GM10248 (cell line): ENCODE measurements at regions of chr10 and their contacts with region 1.

Region 1: GRCh38 chr10:97196223-97197029 is 10.7 kb upstream of the SLIT1 start:
- DNase-seq: peak; percentile 79
- CTCF ChIP-seq: peak; percentile 79

Region 2: DNA sequence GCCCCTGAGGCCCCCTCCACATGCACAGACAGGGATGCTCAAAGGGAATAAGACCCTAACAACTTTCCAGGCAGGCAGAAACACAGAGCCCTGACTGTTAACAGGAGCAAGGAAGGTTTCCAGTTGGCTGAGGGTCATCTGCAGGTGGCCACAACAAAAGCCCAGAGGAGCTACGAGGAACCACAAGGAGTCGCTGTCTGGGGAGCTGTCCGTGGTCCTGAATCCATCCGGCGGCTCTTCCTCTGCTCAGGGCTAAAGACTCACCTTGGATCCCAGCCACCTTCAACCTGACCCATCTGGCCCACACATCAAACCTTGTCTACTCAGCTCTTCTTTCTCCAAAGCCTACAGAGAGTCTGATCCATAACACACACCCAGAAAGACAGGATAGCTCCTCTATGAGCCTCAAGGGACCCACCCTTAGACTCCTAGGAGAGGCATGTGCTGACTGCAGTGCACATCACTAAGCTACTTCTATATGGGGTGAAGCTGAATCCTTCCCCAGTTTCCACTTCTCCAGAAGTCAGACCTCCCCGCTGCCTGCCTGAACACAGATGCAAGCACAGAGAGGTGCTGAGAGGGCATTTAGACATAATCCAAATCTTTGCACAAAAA is 114.7 kb before region 1 on chr10:
- CTCF ChIA-PET with region 1: interaction called, 484 read pairs
- POLR2A ChIA-PET with region 1: no interaction called
- DNase-seq: peak; percentile 83
- CTCF ChIP-seq: peak; percentile 73

Region 3: GRCh38 chr10:97138174-97138573 is 58.3 kb before region 1 on chr10:
- CTCF ChIA-PET with region 1: interaction called, 12 read pairs
- POLR2A ChIA-PET with region 1: no interaction called
- DNase-seq: no peak
- CTCF ChIP-seq: no peak

Region 4: GRCh38 chr10:97179731-97180362 is 16.6 kb before region 1 on chr10:
- CTCF ChIA-PET with region 1: interaction called, 41 read pairs
- POLR2A ChIA-PET with region 1: no interaction called
- DNase-seq: no peak
- CTCF ChIP-seq: no peak

Region 5: GRCh38 chr10:97185326-97186058 is 10.9 kb before region 1 on chr10 and contains the start of gene SLIT1:
- CTCF ChIA-PET with region 1: interaction called, 41 read pairs
- POLR2A ChIA-PET with region 1: no interaction called
- DNase-seq: no peak
- CTCF ChIP-seq: no peak

Region 6: GRCh38 chr10:97234400-97234799 is 38.0 kb after region 1 on chr10:
- CTCF ChIA-PET with region 1: interaction called, 10 read pairs
- POLR2A ChIA-PET with region 1: no interaction called
- DNase-seq: no peak
- CTCF ChIP-seq: peak; percentile 11

Region 7: DNA sequence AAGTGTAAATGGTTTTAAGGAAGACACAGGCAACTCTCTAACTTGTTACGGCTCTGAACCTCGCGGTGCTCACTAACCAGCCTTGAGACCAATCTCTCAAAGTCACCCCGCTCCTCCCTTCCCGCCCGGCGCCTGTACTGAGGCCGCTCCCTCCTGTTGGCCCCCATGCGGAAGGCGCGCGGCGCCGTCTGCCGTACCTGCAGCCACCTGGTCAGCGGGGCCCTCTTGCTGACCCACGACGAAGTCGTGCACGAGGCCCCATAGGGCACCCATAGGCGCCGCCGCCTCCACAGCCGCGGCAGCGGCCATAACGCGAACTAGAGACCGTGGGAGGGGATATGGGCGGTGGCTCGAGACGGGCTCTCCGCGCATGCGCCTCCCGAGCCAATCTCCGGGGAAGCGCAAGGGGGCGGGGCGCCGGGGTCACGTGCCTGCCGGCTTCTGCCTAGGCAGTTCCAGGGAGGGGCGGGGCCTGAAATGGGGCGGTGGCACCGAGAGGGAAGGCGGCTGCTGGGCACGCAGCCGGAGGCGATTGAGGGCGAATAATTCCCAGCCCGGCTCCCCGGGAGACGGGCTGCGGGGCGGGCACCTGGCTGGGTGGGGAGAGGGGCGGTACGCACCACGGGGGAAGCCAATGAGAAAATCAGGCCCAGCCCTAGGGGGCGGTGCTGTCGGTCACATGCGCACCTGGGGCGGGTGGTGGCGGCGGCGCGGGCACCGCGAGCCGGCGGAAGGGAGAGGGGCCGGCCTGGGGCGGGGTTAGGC is 301.8 kb after region 1 on chr10 and contains the start of gene MMS19:
- CTCF ChIA-PET with region 1: no interaction called
- POLR2A ChIA-PET with region 1: no interaction called
- DNase-seq: peak; percentile 99
- CTCF ChIP-seq: no peak